Activated T-helper 1 cell treated with anti-CD3 and anti-CD28 coated beads, Interleukin-12 subunit alpha, Interleukin-12 subunit beta, Interleukin-2, Interleukin-4 antibody, amounts not matched to agents 30 ng/mL and 10 ng/mL and 1 ng/mL, durations not matched to agents 14 hours and 24 hours and 36 hours (primary cell): ENCODE measurements at regions of chr2 and their contacts with region 1.

Region 1: GRCh38 chr2:102020596-102021181 is 28.9 kb downstream of the IL1R2 start:
- DNase-seq: peak; percentile 70
- H3K4me3 Mint-ChIP-seq: no peak overlapping the region
- H3K27ac Mint-ChIP-seq: no peak overlapping the region
- H3K4me1 Mint-ChIP-seq: peaks cover 18% of the 10 kb centered on the region
- H3K27me3 Mint-ChIP-seq: peaks cover 13% of the 10 kb centered on the region

Region 2: DNA sequence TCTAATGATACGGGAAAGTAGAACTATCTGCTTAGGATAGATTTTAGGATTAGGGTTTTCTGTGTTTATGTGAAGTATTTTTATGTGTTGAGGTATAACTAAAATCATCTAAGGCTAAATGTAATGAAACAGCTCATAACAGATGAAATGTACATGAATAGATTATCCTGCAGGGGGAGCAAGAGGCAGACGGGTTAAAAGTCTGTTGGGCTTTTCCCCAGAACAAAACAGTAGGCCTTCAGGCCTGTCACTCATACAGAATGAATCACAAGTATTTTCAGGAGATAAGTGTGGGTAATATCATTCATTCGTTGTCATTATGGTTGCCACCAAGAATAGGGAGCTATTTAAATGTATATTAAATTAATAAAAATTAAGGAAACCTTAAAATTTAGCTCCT is 136.8 kb before region 1 on chr2:
- intact Hi-C with region 1: loop called (anchors 1 kb)
- DNase-seq: no peak
- H3K4me3 Mint-ChIP-seq: no peak overlapping the region
- H3K27ac Mint-ChIP-seq: no peak overlapping the region
- H3K4me1 Mint-ChIP-seq: peaks cover 6% of the 10 kb centered on the region
- H3K27me3 Mint-ChIP-seq: no peaks in the 10 kb centered on the region

Region 3: GRCh38 chr2:102050854-102051391 is 30.2 kb after region 1 on chr2:
- intact Hi-C with region 1: no loop called
- DNase-seq: no peak
- H3K4me3 Mint-ChIP-seq: no peak overlapping the region
- H3K27ac Mint-ChIP-seq: no peak overlapping the region
- H3K4me1 Mint-ChIP-seq: no peaks in the 10 kb centered on the region
- H3K27me3 Mint-ChIP-seq: peaks cover 14% of the 10 kb centered on the region

Region 4: GRCh38 chr2:102147935-102148334 is 127.2 kb after region 1 on chr2:
- intact Hi-C with region 1: loop called (anchors 2 kb)
- DNase-seq: no peak
- H3K4me3 Mint-ChIP-seq: no peak overlapping the region
- H3K27ac Mint-ChIP-seq: peak overlapping the region; percentile 63
- H3K4me1 Mint-ChIP-seq: peaks cover 13% of the 10 kb centered on the region
- H3K27me3 Mint-ChIP-seq: peaks cover 10% of the 10 kb centered on the region

Region 5: DNA sequence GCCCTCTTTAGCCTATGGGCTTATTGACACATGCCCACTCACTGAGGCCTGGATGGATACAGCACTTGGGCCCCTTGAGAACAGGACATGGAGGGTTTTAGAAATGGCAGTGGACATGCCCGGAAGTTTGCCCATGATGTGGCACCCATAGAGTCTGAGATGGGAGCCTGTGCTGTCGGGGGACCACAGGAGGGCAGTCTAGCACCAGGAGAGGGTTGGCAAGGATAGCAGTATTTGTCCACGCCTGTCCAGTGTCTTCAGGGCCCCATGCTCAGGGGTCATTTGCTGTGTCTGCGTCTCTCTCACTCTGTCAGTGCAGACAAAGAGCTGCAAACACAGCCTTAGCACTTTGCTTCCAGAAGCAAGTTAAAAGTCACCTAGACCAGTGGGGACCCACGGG is 214.8 kb after region 1 on chr2:
- intact Hi-C with region 1: loop called (anchors 1 kb)
- DNase-seq: no peak
- H3K4me3 Mint-ChIP-seq: no peak overlapping the region
- H3K27ac Mint-ChIP-seq: no peak overlapping the region
- H3K4me1 Mint-ChIP-seq: peaks cover 53% of the 10 kb centered on the region
- H3K27me3 Mint-ChIP-seq: no peaks in the 10 kb centered on the region

Region 6: DNA sequence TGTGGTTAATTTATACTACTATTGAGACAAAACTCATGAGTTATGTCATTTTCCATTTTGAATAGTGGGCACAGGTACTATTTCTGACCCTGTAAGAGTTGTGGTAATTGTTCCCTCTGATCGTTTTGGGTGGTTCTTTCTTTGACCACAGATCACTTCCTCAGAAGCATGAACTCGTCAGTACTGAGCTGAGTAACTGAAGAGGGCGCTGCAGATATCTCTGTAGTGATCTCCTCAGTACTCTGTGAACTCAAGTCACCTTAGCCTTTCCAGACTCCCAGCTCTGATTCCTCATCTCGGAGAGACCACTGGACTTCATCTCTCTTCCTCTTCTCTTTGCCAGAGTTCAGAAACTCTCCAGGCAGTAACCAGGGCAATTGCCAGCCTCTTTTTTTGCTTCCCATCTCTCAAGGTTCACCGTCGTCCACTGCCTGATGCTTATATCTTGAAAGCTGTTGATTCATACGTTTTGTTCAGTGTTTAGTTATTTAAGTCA is 281.2 kb after region 1 on chr2:
- intact Hi-C with region 1: loop called (anchors 5 kb)
- DNase-seq: peak; percentile 47
- H3K4me3 Mint-ChIP-seq: peak overlapping the region; percentile 43
- H3K27ac Mint-ChIP-seq: peak overlapping the region; percentile 87
- H3K4me1 Mint-ChIP-seq: peaks cover 67% of the 10 kb centered on the region
- H3K27me3 Mint-ChIP-seq: peaks cover 2% of the 10 kb centered on the region

Region 7: GRCh38 chr2:102449370-102449974 is 428.8 kb after region 1 on chr2:
- intact Hi-C with region 1: loop called (anchors 1 kb)
- DNase-seq: peak; percentile 54
- H3K4me3 Mint-ChIP-seq: no peak overlapping the region
- H3K27ac Mint-ChIP-seq: no peak overlapping the region
- H3K4me1 Mint-ChIP-seq: peaks cover 20% of the 10 kb centered on the region
- H3K27me3 Mint-ChIP-seq: no peaks in the 10 kb centered on the region